Psoas muscle (tissue), 8 donors: ENCODE measurements at regions of chr7 and their contacts with region 1.

Region 1: GRCh38 chr7:129468087-129468486 is 33.9 kb downstream of the STRIP2 start:
- DNase-seq: no peak
- ATAC-seq: peak in 2 of 4 donors; percentile 27 to 33
- H3K4me3 ChIP-seq: no peak overlapping the region
- H3K27ac ChIP-seq: peak overlapping the region; percentile 76
- H3K4me1 ChIP-seq: peaks cover 23% of the 10 kb centered on the region
- H3K27me3 ChIP-seq: no peaks in the 10 kb centered on the region
- CTCF ChIP-seq: no peak

Region 2: DNA sequence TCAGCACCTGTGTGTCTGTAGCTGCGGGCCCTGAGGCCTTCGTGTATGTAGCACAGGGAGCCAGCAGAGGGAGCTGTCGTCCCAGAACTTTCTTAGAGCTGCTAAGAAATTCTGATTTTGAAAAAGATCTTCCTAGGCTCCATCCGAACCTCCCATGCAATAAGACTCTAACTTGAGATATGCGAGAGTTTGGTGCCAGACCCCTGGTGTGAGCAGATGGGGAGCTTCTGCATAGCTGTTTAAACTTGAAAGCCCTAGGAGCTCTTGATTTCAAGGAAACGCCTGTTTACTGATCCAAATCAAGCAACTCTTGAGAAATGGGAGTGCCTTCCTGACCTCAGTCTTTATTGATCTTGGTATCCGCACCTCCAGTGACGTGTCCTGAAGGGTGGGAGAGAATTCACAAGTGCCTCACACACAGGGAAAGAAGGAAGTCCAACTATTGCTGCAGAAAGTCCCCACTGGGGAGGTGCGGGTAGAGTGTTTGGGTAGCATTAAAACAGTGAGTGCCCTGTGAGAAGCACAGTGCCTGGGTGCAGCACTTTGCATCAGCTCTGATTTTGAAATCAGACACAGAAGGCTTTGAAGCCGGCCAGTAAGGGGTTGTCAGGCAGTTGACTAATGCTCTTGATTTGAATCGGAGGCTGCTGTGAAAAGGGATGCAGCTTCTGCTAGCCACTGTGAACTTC is 100.2 kb before region 1 on chr7:
- intact Hi-C with region 1: loop called (anchors 1 to 2 kb)
- DNase-seq: peak; percentile 62 to 86
- ATAC-seq: peak; percentile 93 to 97 (median 95)
- H3K4me3 ChIP-seq: no peak overlapping the region
- H3K27ac ChIP-seq: peak overlapping the region; percentile 57
- H3K4me1 ChIP-seq: peaks cover 12% of the 10 kb centered on the region
- H3K27me3 ChIP-seq: no peaks in the 10 kb centered on the region
- CTCF ChIP-seq: peak; percentile 89

Region 3: DNA sequence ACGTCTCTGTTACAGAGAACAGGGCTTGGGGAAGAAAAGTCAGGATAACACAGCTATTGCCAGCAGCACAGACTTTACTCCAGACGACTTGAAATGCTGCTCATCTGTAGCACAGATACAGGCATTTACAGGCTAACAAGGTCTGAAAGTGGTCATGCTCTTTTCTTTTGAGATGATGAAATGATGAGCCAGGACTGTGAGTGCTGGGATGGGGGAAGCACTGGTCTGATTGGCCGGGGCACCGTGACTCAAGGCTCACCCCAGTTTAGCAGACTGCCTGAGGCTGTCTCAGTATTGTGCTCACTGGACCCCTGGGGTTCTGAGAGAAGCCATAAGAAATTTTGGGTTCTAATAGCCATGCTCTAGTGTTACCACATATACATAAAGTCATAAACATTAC is 46.6 kb after region 1 on chr7:
- intact Hi-C with region 1: no loop called
- DNase-seq: no peak
- ATAC-seq: no peak
- H3K4me3 ChIP-seq: no peak overlapping the region
- H3K27ac ChIP-seq: no peak overlapping the region
- H3K4me1 ChIP-seq: no peaks in the 10 kb centered on the region
- H3K27me3 ChIP-seq: no peaks in the 10 kb centered on the region
- CTCF ChIP-seq: no peak